ENCODE measurements at regions of chr20 and their contacts with region 1.

Region 1: DNA sequence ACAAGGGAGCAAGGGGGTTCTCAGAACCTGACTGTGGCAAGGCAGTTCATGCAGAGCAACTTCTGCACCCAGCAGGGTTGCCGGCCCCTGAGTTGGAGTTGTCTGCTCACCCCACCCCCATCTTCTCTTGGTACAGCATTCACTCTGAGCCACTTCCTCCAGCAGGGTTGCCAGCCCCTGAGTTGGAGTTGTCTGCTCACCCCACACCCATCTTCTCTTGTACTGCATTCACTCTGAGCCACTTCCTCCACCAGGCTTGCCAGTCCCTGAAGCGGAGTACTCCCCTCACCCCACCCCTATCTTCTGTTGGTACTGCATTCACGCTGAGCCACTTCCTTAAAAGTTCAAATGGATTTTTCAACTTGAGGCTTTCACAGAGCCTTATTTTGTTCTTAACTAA is 79.7 kb upstream of the SYNDIG1 start:
- DNase-seq: peak in 13 of 14 experiments; percentile 2 to 65 (median 38)
- ATAC-seq: peak; percentile 99
- H3K4me3 ChIP-seq: no peak overlapping the region
- H3K4me3 Mint-ChIP-seq: peak overlapping the region; percentile 67
- H3K27ac ChIP-seq: no peak overlapping the region
- H3K27ac Mint-ChIP-seq: peak overlapping the region; percentile 69
- H3K4me1 ChIP-seq: peaks cover 23% of the 10 kb centered on the region
- H3K4me1 Mint-ChIP-seq: peaks cover 49% of the 10 kb centered on the region
- H3K27me3 ChIP-seq: no peaks in the 10 kb centered on the region
- H3K27me3 Mint-ChIP-seq: no peaks in the 10 kb centered on the region
- CTCF ChIP-seq: no peak

Region 2: DNA sequence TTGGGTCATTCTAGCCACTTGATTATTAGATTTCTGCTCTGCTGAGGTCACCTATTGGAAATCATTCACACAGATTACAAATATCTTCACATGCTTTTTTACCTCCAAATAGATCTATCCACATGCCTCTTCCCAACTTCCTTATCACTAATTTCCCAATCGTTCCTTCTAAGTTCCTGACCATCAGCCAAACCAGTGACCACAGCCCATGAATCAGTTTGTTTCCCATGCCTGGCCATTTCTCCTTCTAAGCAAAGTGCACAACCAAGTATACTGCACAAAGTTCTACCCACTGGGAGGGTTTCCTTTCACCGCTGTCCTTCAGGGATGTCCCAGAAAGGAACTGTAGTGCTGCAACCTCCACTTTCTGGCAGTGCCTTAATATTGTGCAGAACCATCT is 60.8 kb before region 1 on chr20:
- CTCF ChIA-PET with region 1: no interaction called
- POLR2A ChIA-PET with region 1: no interaction called
- intact Hi-C with region 1: loop called in 1 of 2 experiments (anchors 10 kb)
- DNase-seq: no peak
- ATAC-seq: no peak
- H3K4me3 ChIP-seq: no peak overlapping the region
- H3K4me3 Mint-ChIP-seq: no peak overlapping the region
- H3K27ac ChIP-seq: no peak overlapping the region
- H3K27ac Mint-ChIP-seq: no peak overlapping the region
- H3K4me1 ChIP-seq: no peaks in the 10 kb centered on the region
- H3K4me1 Mint-ChIP-seq: no peaks in the 10 kb centered on the region
- H3K27me3 ChIP-seq: no peaks in the 10 kb centered on the region
- H3K27me3 Mint-ChIP-seq: no peaks in the 10 kb centered on the region
- CTCF ChIP-seq: no peak

Measured in CD4-positive, alpha-beta T cell (primary cell).